PC-9 (cell line): ENCODE measurements at regions of chr4 and their contacts with region 1.

Region 1: DNA sequence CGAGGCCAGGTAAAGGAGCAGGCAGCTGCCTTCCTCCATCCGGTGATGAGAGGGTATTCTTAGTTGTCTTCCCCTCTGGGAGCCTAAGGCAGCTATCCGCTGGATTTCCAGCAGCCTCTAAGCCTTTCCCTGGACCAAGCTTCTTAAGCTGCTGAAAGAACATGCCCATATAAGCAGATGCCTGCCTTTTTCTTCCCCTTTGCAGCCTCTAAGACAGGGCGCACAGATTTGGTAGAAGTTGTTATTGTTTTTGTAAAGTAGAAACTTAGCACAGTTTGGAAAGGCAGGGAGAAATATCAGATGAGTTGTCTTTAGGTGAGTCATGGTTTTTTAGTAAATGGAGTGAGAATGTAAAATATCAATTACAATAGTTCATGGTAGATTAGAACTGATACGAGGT is 210.8 kb downstream of the ARHGAP10 start:
- DNase-seq: no peak
- H3K4me3 ChIP-seq: no peak overlapping the region
- H3K27ac ChIP-seq: no peak overlapping the region
- H3K4me1 ChIP-seq: no peaks in the 10 kb centered on the region
- H3K27me3 ChIP-seq: no peaks in the 10 kb centered on the region
- CTCF ChIP-seq: no peak

Region 2: GRCh38 chr4:147707865-147708672 is 234.7 kb before region 1 on chr4:
- CTCF ChIA-PET with region 1: no interaction called
- POLR2A ChIA-PET with region 1: no interaction called
- intact Hi-C with region 1: no loop called
- DNase-seq: peak in 1 of 2 experiments; percentile 44
- H3K4me3 ChIP-seq: no peak overlapping the region
- H3K27ac ChIP-seq: no peak overlapping the region
- H3K4me1 ChIP-seq: peaks cover 3% of the 10 kb centered on the region; the same call in 1 of the 2 replicates
- H3K27me3 ChIP-seq: no peaks in the 10 kb centered on the region
- CTCF ChIP-seq: peak; percentile 88

Region 3: DNA sequence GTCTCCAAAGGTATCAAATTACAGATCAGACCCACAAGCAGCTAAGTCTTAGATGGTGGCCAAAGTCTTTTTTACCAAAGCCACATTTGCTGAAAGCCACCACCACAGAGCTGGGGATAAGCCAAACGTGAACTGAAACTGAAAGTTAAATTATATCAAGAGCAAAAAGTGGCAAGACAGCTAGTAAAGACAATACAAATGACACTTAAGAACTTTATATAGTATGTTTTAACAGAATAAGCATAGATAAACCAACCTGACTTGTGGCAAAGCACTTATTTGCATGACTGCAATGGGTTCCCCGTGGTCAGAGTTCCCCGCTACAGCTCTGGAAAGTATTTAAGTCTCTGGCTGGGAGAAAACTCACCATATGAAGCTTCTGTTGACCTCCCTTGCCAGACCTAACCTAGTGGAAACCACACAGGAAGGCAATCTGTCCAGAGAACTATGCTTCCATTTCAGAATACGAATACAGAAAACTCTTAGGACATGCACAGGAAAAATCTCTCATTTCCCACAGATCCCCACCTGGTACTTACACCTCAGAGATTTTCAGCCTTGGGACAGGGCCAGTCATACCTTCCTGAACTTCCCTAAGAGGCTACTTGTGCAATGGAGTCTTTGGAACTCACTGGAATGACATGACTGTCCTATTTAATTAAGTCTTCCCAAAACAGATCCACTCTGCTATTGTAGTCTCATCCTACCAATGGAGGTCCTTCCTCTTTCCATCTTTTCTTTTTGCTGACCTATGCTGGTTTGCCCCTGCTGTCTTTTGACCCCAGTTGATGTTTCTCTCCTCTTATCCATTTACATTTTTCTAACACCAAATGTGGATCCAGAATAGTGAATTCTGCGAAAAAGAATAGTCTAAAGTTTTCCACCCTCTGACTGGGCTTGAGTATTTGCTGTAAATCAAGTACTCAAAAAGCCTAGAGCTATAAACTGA is 274.4 kb after region 1 on chr4:
- CTCF ChIA-PET with region 1: no interaction called
- POLR2A ChIA-PET with region 1: interaction called, 10 read pairs
- intact Hi-C with region 1: no loop called
- DNase-seq: no peak
- H3K4me3 ChIP-seq: no peak overlapping the region
- H3K27ac ChIP-seq: no peak overlapping the region
- H3K4me1 ChIP-seq: no peaks in the 10 kb centered on the region
- H3K27me3 ChIP-seq: no peaks in the 10 kb centered on the region
- CTCF ChIP-seq: no peak

Region 4: GRCh38 chr4:148441986-148442831 is 499.5 kb after region 1 on chr4 and contains the start of gene NR3C2:
- CTCF ChIA-PET with region 1: no interaction called
- POLR2A ChIA-PET with region 1: no interaction called
- intact Hi-C with region 1: no loop called
- DNase-seq: peak; percentile 92 to 96
- H3K4me3 ChIP-seq: peak within 1 kb of the TSS; percentile 74
- H3K27ac ChIP-seq: no peak within 1 kb of the TSS
- H3K4me1 ChIP-seq: peaks cover 13% of the 10 kb centered on the region; the same call in 1 of the 2 replicates
- H3K27me3 ChIP-seq: peaks cover 20% of the 10 kb centered on the region
- CTCF ChIP-seq: no peak
- total RNA-seq, gene NR3C2: 0.93 and 0.96 TPM in 2 replicates